B cell (primary cell): ENCODE measurements at regions of chr9 and their contacts with region 1.

Region 1: GRCh38 chr9:4792572-4793458 is at the start of gene RCL1:
- DNase-seq: peak; percentile 97
- ATAC-seq: peak; percentile 91
- H3K4me3 ChIP-seq: peak within 1 kb of the TSS; percentile 81 to 96 (median 94)
- H3K4me3 Mint-ChIP-seq: peak within 1 kb of the TSS; percentile 98
- H3K27ac ChIP-seq: peak within 1 kb of the TSS; percentile 89 to 97
- H3K27ac Mint-ChIP-seq: peak within 1 kb of the TSS; percentile 97
- H3K4me1 ChIP-seq: peaks cover 22 to 30% of the 10 kb centered on the region in 2 donors
- H3K4me1 Mint-ChIP-seq: peaks cover 36% of the 10 kb centered on the region
- H3K27me3 ChIP-seq: no peaks in the 10 kb centered on the region
- H3K27me3 Mint-ChIP-seq: peaks cover 1% of the 10 kb centered on the region
- CTCF ChIP-seq: no peak
- total RNA-seq, gene RCL1: 21.7 and 29.6 TPM in 2 replicates

Region 2: GRCh38 chr9:3916984-3917383 is 875.8 kb before region 1 on chr9:
- CTCF ChIA-PET with region 1: no interaction called
- POLR2A ChIA-PET with region 1: no interaction called
- intact Hi-C with region 1: no loop called
- DNase-seq: no peak
- ATAC-seq: no peak
- H3K4me3 ChIP-seq: no peak overlapping the region
- H3K4me3 Mint-ChIP-seq: no peak overlapping the region
- H3K27ac ChIP-seq: no peak overlapping the region
- H3K27ac Mint-ChIP-seq: no peak overlapping the region
- H3K4me1 ChIP-seq: no peaks in the 10 kb centered on the region
- H3K4me1 Mint-ChIP-seq: no peaks in the 10 kb centered on the region
- H3K27me3 ChIP-seq: no peaks in the 10 kb centered on the region
- H3K27me3 Mint-ChIP-seq: peaks cover 18% of the 10 kb centered on the region
- CTCF ChIP-seq: no peak

Region 3: DNA sequence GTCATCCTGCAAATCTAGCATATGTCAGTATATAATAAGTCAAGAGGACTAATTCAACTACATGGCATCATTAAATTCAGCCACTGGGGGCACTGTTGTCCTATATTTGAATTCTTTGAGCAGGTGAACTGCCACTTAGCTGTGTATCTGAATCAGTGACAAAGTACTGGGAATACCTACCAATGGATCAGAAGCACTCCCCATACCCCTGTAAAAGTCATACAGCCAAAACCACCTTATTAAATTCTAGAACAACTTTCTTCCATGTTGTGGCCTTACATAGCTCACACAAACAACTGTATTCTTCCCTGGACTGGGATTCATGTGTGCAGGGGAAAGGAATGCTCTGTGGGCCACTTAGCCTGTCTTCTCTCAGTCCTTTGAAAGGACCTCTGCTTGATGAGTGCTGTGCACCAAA is 188.1 kb before region 1 on chr9:
- CTCF ChIA-PET with region 1: no interaction called
- POLR2A ChIA-PET with region 1: no interaction called
- intact Hi-C with region 1: no loop called
- DNase-seq: peak; percentile 69
- ATAC-seq: peak; percentile 33
- H3K4me3 ChIP-seq: no peak overlapping the region
- H3K4me3 Mint-ChIP-seq: no peak overlapping the region
- H3K27ac ChIP-seq: no peak overlapping the region
- H3K27ac Mint-ChIP-seq: no peak overlapping the region
- H3K4me1 ChIP-seq: no peaks in the 10 kb centered on the region
- H3K4me1 Mint-ChIP-seq: peaks cover 4% of the 10 kb centered on the region
- H3K27me3 ChIP-seq: peaks cover 0 to 3% (median 0%) of the 10 kb centered on the region in 4 experiments
- H3K27me3 Mint-ChIP-seq: no peaks in the 10 kb centered on the region
- CTCF ChIP-seq: peak; percentile 59

Region 4: DNA sequence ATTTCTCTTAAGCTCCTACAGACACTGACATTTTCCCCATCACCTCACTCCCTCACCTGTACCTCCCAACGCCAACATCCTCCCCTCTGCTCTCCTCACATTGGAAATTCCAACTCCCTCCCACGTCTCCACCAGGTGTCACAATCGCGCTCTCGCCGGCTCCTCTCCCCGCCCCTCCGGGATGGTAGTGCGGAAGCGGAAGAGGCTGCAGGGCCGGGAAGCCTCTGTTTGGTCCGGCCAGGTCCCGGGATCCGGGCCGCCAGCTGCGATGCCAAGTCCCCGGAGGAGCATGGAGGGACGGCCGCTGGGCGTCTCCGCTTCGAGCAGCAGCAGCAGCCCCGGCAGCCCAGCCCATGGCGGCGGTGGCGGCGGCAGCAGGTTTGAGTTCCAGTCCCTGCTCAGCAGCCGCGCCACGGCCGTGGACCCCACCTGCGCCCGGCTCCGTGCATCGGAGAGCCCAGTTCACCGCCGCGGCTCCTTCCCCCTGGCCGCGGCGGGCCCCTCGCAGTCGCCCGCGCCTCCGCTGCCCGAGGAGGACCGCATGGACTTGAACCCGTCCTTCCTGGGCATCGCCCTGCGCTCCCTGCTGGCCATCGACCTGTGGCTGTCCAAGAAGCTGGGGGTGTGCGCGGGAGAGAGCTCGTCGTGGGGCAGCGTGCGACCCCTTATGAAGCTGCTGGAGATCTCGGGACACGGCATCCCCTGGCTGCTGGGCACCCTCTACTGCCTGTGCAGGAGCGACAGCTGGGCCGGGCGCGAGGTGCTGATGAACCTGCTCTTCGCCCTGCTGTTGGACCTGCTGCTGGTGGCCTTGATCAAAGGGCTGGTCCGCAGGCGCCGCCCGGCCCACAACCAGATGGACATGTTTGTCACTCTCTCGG is 130.5 kb before region 1 on chr9 and contains the start of gene PLPP6:
- CTCF ChIA-PET with region 1: no interaction called
- POLR2A ChIA-PET with region 1: no interaction called
- intact Hi-C with region 1: loop called (anchors 5 kb)
- DNase-seq: peak; percentile 86
- ATAC-seq: peak; percentile 85
- H3K4me3 ChIP-seq: peak within 1 kb of the TSS; percentile 39 to 92 (median 74)
- H3K4me3 Mint-ChIP-seq: peak within 1 kb of the TSS; percentile 96
- H3K27ac ChIP-seq: peak within 1 kb of the TSS; percentile 42 to 57
- H3K27ac Mint-ChIP-seq: peak within 1 kb of the TSS; percentile 91
- H3K4me1 ChIP-seq: peaks cover 48 to 50% of the 10 kb centered on the region in 2 donors
- H3K4me1 Mint-ChIP-seq: peaks cover 46% of the 10 kb centered on the region
- H3K27me3 ChIP-seq: peaks cover 0 to 5% (median under 1%) of the 10 kb centered on the region in 4 experiments
- H3K27me3 Mint-ChIP-seq: peaks cover 12% of the 10 kb centered on the region
- CTCF ChIP-seq: peak; percentile 51
- total RNA-seq, gene PLPP6: 12.8 and 14.3 TPM in 2 replicates

Region 5: GRCh38 chr9:4740638-4741364 is 52.0 kb before region 1 on chr9 and contains the start of gene AK3:
- CTCF ChIA-PET with region 1: interaction called, 4 read pairs
- POLR2A ChIA-PET with region 1: interaction called, 7 read pairs
- intact Hi-C with region 1: loop called (anchors 1 kb)
- DNase-seq: peak; percentile 92
- ATAC-seq: peak; percentile 92
- H3K4me3 ChIP-seq: peak within 1 kb of the TSS; percentile 73 to 90 (median 85)
- H3K4me3 Mint-ChIP-seq: peak within 1 kb of the TSS; percentile 89
- H3K27ac ChIP-seq: peak within 1 kb of the TSS; percentile 51 to 83
- H3K27ac Mint-ChIP-seq: peak within 1 kb of the TSS; percentile 90
- H3K4me1 ChIP-seq: peaks cover 19 to 23% of the 10 kb centered on the region in 2 donors
- H3K4me1 Mint-ChIP-seq: peaks cover 27% of the 10 kb centered on the region
- H3K27me3 ChIP-seq: no peaks in the 10 kb centered on the region
- H3K27me3 Mint-ChIP-seq: no peaks in the 10 kb centered on the region
- CTCF ChIP-seq: no peak
- total RNA-seq, gene AK3: 20.4 and 22.9 TPM in 2 replicates

Region 6: GRCh38 chr9:4814913-4815312 is 22.1 kb after region 1 on chr9:
- CTCF ChIA-PET with region 1: interaction called, 3 read pairs
- POLR2A ChIA-PET with region 1: interaction called, 4 read pairs
- intact Hi-C with region 1: loop called (anchors 2 kb)
- DNase-seq: peak; percentile 26
- ATAC-seq: no peak
- H3K4me3 ChIP-seq: peak overlapping the region in 1 of 5 experiments; percentile 4
- H3K4me3 Mint-ChIP-seq: peak overlapping the region; percentile 59
- H3K27ac ChIP-seq: peak overlapping the region in 1 of 2 donors; percentile 65
- H3K27ac Mint-ChIP-seq: peak overlapping the region; percentile 75
- H3K4me1 ChIP-seq: peaks cover 15 to 34% of the 10 kb centered on the region in 2 donors
- H3K4me1 Mint-ChIP-seq: peaks cover 49% of the 10 kb centered on the region
- H3K27me3 ChIP-seq: no peaks in the 10 kb centered on the region
- H3K27me3 Mint-ChIP-seq: no peaks in the 10 kb centered on the region
- CTCF ChIP-seq: no peak

Region 7: GRCh38 chr9:5832543-5833529 is 1040.0 kb after region 1 on chr9 and contains the start of gene ERMP1:
- CTCF ChIA-PET with region 1: no interaction called
- POLR2A ChIA-PET with region 1: no interaction called
- intact Hi-C with region 1: loop called (anchors 2 kb)
- DNase-seq: peak; percentile 93
- ATAC-seq: peak; percentile 89
- H3K4me3 ChIP-seq: peak within 1 kb of the TSS; percentile 63 to 83 (median 75)
- H3K4me3 Mint-ChIP-seq: peak within 1 kb of the TSS; percentile 95
- H3K27ac ChIP-seq: peak within 1 kb of the TSS in 1 of 2 donors; percentile 50
- H3K27ac Mint-ChIP-seq: peak within 1 kb of the TSS; percentile 93
- H3K4me1 ChIP-seq: peaks cover 19 to 25% of the 10 kb centered on the region in 2 donors
- H3K4me1 Mint-ChIP-seq: peaks cover 37% of the 10 kb centered on the region
- H3K27me3 ChIP-seq: no peaks in the 10 kb centered on the region
- H3K27me3 Mint-ChIP-seq: no peaks in the 10 kb centered on the region
- CTCF ChIP-seq: peak; percentile 96
- total RNA-seq, gene ERMP1: 10.6 and 12.8 TPM in 2 replicates